Mammary epithelial cell (primary cell): ENCODE measurements at regions of chr13 and their contacts with region 1.

Region 1: GRCh38 chr13:110070511-110071120 is 236.3 kb downstream of the COL4A1 start:
- DNase-seq: peak; percentile 88
- H3K4me3 ChIP-seq: no peak overlapping the region
- H3K27ac ChIP-seq: peak overlapping the region; percentile 91
- H3K4me1 ChIP-seq: peaks cover 19% of the 10 kb centered on the region
- H3K27me3 ChIP-seq: no peaks in the 10 kb centered on the region
- CTCF ChIP-seq: no peak

Region 2: DNA sequence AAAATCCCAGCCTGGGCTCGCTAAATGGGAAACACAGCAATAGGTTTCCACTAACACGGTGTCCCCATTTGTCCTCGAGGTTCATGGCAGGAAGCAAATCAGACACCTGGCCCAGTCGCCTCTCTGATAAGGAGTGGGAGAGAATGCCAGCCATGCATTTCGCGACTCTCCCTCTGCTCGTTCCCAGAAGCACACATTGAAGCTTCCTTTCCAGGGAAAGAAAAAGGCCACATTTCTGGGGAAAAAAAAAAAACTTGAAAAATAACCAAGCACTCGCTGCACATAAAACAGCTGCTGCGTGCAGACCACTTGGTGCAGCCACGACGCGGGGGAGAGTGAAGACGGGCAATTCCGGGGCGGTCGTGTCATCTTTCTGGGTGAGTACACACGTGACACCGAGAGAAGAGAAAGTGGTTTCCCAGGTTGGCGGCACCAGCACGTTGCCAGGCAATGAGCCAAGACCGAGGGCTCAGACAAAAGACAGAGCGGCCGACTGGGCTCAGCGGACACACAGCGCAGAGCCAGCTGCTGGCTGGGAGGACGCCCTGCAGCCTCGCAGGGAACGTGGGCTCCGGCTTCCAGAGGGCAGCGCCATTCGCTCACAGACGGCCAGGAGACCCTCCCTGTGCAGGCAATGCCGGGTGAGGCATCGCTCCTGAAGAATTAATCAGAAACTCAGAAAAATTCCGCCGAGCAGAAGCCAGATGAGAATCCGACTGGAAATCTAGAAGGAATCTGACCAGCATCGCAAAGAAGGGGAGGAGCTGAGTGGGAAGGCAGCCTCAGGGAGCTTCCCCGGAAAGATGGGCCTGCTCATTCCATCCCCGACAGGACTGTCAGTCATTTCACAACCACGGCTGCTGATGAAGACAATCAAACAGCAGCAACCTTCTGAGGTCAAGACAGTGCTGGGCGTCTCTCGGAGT is 201.0 kb before region 1 on chr13:
- CTCF ChIA-PET with region 1: no interaction called
- dilution Hi-C with region 1: no loop called
- in situ Hi-C with region 1: no loop called
- intact Hi-C with region 1: loop called (anchors 10 kb)
- DNase-seq: peak; percentile 34
- H3K4me3 ChIP-seq: no peak overlapping the region
- H3K27ac ChIP-seq: no peak overlapping the region
- H3K4me1 ChIP-seq: peaks cover 2% of the 10 kb centered on the region
- H3K27me3 ChIP-seq: no peaks in the 10 kb centered on the region
- CTCF ChIP-seq: no peak

Region 3: DNA sequence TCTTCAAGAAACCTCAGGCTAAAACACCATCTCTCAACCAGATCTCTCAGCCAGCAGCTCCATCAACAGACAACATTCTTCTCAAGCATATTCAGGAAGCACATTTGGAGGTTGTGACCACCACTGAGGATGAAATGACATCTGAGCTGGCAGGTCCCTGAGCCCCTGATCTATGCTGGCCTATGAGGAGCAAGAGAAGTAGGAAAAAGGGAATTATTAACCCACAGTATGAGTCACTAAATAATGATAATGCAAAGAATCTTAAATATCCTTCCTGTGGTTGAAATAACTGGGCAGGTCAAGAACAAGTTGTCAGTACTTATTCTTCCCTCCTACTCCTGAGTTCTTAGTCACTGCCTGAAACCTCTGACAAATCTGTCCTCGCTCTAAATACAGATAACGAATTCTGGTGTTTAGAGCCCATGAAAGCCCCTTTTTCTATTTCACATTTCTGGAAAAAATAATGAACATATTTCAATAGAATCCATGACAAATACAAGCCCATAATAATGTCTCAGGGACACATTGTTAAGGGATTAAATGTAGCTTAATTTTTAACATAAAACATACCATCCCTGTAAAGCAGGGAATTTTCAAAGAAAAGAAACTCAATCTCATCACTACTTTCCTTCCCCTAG is 58.4 kb before region 1 on chr13:
- CTCF ChIA-PET with region 1: no interaction called
- dilution Hi-C with region 1: no loop called
- in situ Hi-C with region 1: loop called in 1 of 2 experiments (anchors 5 kb)
- intact Hi-C with region 1: loop called (anchors 2 kb)
- DNase-seq: peak; percentile 89
- H3K4me3 ChIP-seq: no peak overlapping the region
- H3K27ac ChIP-seq: peak overlapping the region; percentile 100
- H3K4me1 ChIP-seq: peaks cover 59% of the 10 kb centered on the region
- H3K27me3 ChIP-seq: no peaks in the 10 kb centered on the region
- CTCF ChIP-seq: no peak

Region 4: GRCh38 chr13:110017379-110017778 is 53.2 kb before region 1 on chr13:
- CTCF ChIA-PET with region 1: no interaction called
- dilution Hi-C with region 1: no loop called
- in situ Hi-C with region 1: loop called in 1 of 2 experiments (anchors 5 kb)
- intact Hi-C with region 1: loop called (anchors 2 kb)
- DNase-seq: peak; percentile 86
- H3K4me3 ChIP-seq: no peak overlapping the region
- H3K27ac ChIP-seq: peak overlapping the region; percentile 95
- H3K4me1 ChIP-seq: peaks cover 46% of the 10 kb centered on the region
- H3K27me3 ChIP-seq: no peaks in the 10 kb centered on the region
- CTCF ChIP-seq: no peak

Region 5: GRCh38 chr13:110030394-110030928 is 40.2 kb before region 1 on chr13:
- CTCF ChIA-PET with region 1: no interaction called
- dilution Hi-C with region 1: no loop called
- in situ Hi-C with region 1: no loop called
- intact Hi-C with region 1: no loop called
- DNase-seq: no peak
- H3K4me3 ChIP-seq: no peak overlapping the region
- H3K27ac ChIP-seq: no peak overlapping the region
- H3K4me1 ChIP-seq: no peaks in the 10 kb centered on the region
- H3K27me3 ChIP-seq: no peaks in the 10 kb centered on the region
- CTCF ChIP-seq: no peak

Region 6: GRCh38 chr13:110103534-110103933 is 32.9 kb after region 1 on chr13:
- CTCF ChIA-PET with region 1: no interaction called
- dilution Hi-C with region 1: loop called (anchors 5 kb)
- in situ Hi-C with region 1: no loop called
- intact Hi-C with region 1: loop called (anchors 2 kb)
- DNase-seq: peak; percentile 81
- H3K4me3 ChIP-seq: no peak overlapping the region
- H3K27ac ChIP-seq: peak overlapping the region; percentile 52
- H3K4me1 ChIP-seq: peaks cover 13% of the 10 kb centered on the region
- H3K27me3 ChIP-seq: no peaks in the 10 kb centered on the region
- CTCF ChIP-seq: no peak